Lower leg skin (tissue), 4 donors: ENCODE measurements at regions of chr5 and their contacts with region 1.

Region 1: DNA sequence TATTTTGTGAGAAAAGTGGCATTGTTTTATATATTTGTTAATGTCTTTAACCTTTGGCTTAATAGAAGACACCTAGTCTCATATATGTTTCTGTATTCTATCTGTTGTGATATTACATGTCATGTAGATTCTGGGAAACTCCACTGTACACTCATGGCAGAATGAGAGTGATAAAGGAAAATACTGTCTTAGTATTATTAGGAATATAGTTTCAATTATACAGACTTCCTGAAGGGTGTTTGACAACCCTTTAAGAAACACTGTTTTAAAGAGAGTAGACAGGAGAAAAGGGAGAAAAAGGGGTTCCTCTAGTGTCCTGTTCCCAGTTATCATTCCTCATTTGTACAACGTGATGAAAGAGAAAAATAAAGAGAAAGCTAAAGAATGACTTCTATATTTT is 42.1 kb upstream of the SPEF2 start:
- DNase-seq: no peak
- H3K4me3 ChIP-seq: no peak overlapping the region
- CTCF ChIP-seq: no peak
- POLR2A ChIP-seq: no peak

Region 2: GRCh38 chr5:35557742-35558141 is 17.8 kb before region 1 on chr5:
- intact Hi-C with region 1: loop called (anchors 2 kb)
- DNase-seq: no peak
- H3K4me3 ChIP-seq: no peak overlapping the region
- CTCF ChIP-seq: no peak
- POLR2A ChIP-seq: no peak